ENCODE measurements at regions of chr2 and their contacts with region 1.

Region 1: DNA sequence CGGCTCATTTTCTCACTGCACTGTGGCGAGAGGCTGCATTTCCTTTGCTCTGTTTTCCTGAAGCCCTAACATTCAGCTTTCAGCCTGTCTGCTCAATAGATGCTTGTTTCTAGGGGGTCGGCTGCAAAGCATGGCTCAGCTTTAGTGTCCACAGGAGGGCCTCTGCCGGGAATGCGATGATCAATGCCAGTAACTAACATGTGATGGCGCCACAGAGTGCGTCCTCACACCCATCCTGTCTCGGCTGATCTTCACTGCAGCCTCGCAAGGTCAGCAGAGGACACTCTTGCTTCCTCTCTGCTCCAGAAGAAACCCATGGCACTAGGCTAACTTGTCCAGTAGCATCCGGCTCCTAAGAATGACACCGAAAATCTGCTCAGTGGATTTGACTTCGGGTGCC is 156.4 kb upstream of the PXDN start:
- DNase-seq: no peak
- ATAC-seq: no peak
- H3K4me3 ChIP-seq: no peak overlapping the region
- H3K27ac ChIP-seq: no peak overlapping the region
- H3K4me1 ChIP-seq: no peaks in the 10 kb centered on the region
- H3K27me3 ChIP-seq: peaks cover 0 to 6% (median 0%) of the 10 kb centered on the region in 7 donors
- CTCF ChIP-seq: no peak

Region 2: DNA sequence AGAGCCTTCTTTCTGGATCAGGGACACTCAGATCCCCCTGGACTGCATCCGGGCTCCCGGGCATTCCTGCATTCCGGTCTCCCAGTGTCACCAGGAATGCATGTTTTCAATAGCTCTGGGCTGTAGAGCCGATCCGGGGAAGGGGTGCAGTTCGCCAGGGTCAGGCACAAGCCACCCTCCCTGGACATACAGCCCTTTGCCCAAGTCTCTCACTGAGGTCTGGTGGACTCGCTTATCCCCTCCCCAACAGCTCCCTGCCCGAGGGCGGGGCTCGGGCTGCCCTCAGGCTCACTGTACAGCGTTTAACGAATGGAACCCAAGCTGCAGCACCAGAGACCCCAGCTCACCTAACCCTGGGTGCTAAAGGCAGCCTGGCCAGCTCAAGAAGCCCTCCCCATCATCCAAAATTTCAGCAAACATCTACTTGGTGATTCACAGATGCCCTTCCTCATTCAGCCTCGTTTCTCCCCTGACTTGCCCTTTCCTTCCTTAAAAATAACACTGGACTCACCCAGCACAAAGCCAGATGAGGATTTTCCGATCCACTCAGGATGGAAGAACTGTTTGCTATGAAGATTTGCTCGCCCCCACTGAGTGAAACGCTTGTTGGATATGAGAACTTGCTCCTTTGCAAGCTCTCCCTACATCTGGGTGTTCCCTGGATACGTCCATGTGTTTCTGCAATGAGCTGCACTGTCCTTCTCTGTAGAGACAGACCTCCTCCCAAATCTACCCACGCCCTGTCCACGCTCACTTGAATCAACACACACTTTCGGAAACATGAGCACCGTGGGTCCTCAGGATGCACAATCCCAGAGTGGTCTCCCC is 214.6 kb before region 1 on chr2:
- intact Hi-C with region 1: no loop called
- DNase-seq: no peak
- ATAC-seq: peak in 6 of 8 donors; percentile 16 to 52 (median 37)
- H3K4me3 ChIP-seq: no peak overlapping the region
- H3K27ac ChIP-seq: peak overlapping the region in 2 of 10 donors; percentile 20 to 30
- H3K4me1 ChIP-seq: peaks cover 0 to 34% (median 4%) of the 10 kb centered on the region in 9 donors
- H3K27me3 ChIP-seq: peaks cover 0 to 5% (median 0%) of the 10 kb centered on the region in 7 donors
- CTCF ChIP-seq: no peak

Region 3: GRCh38 chr2:1837022-1837421 is 63.7 kb before region 1 on chr2:
- intact Hi-C with region 1: no loop called
- DNase-seq: no peak
- ATAC-seq: peak in 4 of 8 donors; percentile 28 to 67 (median 40)
- H3K4me3 ChIP-seq: no peak overlapping the region
- H3K27ac ChIP-seq: no peak overlapping the region
- H3K4me1 ChIP-seq: peaks cover 0 to 8% (median 0%) of the 10 kb centered on the region in 9 donors
- H3K27me3 ChIP-seq: peaks cover 0 to 7% (median 0%) of the 10 kb centered on the region in 7 donors
- CTCF ChIP-seq: no peak

Region 4: DNA sequence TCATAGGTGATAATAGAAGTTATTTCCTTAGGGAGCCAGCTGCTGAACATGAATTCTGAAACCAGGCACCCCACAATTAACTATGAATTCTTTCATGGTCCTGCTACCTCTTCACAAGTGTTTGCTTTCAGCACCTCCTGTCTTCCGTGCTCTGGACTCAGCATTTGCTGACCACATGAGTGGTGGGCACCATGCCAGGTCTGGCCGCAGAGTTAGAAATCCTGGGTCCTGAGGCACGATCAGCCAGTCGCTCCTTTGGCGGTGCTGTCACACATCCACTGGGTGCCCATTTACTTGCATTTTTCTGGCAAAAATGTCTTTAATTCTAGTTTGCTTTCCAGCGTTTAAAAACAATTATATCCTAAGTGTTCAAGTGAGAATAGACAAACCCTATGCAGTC is 39.9 kb after region 1 on chr2:
- intact Hi-C with region 1: no loop called
- DNase-seq: peak; percentile 55 to 61
- ATAC-seq: peak in 6 of 8 donors; percentile 48 to 72 (median 53)
- H3K4me3 ChIP-seq: no peak overlapping the region
- H3K27ac ChIP-seq: no peak overlapping the region
- H3K4me1 ChIP-seq: peaks cover 0 to 13% (median 0%) of the 10 kb centered on the region in 9 donors
- H3K27me3 ChIP-seq: no peaks in the 10 kb centered on the region
- CTCF ChIP-seq: peak in 2 of 9 donors; percentile 20 to 24

Region 5: GRCh38 chr2:2127467-2127866 is 226.7 kb after region 1 on chr2:
- intact Hi-C with region 1: loop called in 1 of 10 experiments (anchors 10 kb)
- DNase-seq: no peak
- ATAC-seq: no peak
- H3K4me3 ChIP-seq: no peak overlapping the region
- H3K27ac ChIP-seq: no peak overlapping the region
- H3K4me1 ChIP-seq: no peaks in the 10 kb centered on the region
- H3K27me3 ChIP-seq: peaks cover 0 to 29% (median 6%) of the 10 kb centered on the region in 7 donors
- CTCF ChIP-seq: no peak

Region 6: DNA sequence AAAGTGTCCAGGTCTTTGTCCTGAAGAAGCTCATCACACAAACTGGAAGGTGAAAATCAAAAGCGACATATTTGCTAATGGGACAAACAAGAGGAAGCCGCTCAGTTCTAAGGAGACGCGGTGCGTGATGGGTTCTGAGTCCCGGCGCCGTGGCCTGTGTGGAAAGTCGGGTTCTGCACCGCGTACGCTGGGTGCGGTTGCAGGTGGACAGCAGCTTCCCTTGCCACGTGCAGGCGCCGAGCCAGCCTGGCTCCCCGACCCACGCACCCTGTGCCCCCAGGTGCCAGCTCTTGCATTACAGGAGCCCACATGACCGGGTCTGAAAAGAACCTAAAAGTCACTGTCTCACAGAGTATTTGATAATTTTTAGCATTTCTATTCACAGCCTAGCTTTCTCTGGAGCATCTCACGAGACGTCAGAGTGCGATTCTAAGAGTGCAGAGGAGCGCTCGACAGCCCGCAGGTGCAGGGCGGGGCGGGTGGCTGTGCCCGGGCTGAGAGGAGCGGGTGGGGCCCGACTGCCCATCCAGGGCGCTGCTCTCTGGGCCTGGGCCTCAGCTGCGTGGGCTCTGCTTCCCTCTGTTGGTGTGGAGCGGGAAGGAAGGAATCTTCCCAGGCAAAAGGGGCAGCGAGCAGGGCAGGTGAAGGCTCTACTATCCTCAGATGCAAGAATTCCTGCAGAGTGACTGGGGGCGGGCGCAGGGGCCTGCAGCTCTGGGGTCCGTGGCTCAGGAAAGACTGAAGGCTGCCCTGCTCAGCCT is 390.9 kb after region 1 on chr2:
- intact Hi-C with region 1: loop called in 1 of 10 experiments (anchors 5 kb)
- DNase-seq: peak in 1 of 2 donors; percentile 43
- ATAC-seq: peak; percentile 46 to 91 (median 84)
- H3K4me3 ChIP-seq: no peak overlapping the region
- H3K27ac ChIP-seq: no peak overlapping the region
- H3K4me1 ChIP-seq: peaks cover 0 to 3% (median 0%) of the 10 kb centered on the region in 9 donors
- H3K27me3 ChIP-seq: peaks cover 0 to 52% (median 19%) of the 10 kb centered on the region in 7 donors
- CTCF ChIP-seq: peak; percentile 14 to 72 (median 64)

Region 7: GRCh38 chr2:2306878-2307277 is 406.1 kb after region 1 on chr2:
- intact Hi-C with region 1: no loop called
- DNase-seq: no peak
- ATAC-seq: no peak
- H3K4me3 ChIP-seq: no peak overlapping the region
- H3K27ac ChIP-seq: no peak overlapping the region
- H3K4me1 ChIP-seq: no peaks in the 10 kb centered on the region
- H3K27me3 ChIP-seq: peaks cover 0 to 32% (median 8%) of the 10 kb centered on the region in 7 donors
- CTCF ChIP-seq: no peak